Activated T-helper 1 cell treated with anti-CD3 and anti-CD28 coated beads, Interleukin-12 subunit alpha, Interleukin-12 subunit beta, Interleukin-2, Interleukin-4 antibody, amounts not matched to agents 30 ng/mL and 10 ng/mL and 1 ng/mL, durations not matched to agents 14 hours and 24 hours and 36 hours (primary cell): ENCODE measurements at regions of chr20 and their contacts with region 1.

Region 1: GRCh38 chr20:4813863-4814695 is 92.4 kb downstream of the PRND start:
- DNase-seq: peak; percentile 79
- H3K4me3 Mint-ChIP-seq: peak overlapping the region; percentile 89
- H3K27ac Mint-ChIP-seq: peak overlapping the region; percentile 99
- H3K4me1 Mint-ChIP-seq: peaks cover 63% of the 10 kb centered on the region
- H3K27me3 Mint-ChIP-seq: no peaks in the 10 kb centered on the region

Region 2: GRCh38 chr20:3901028-3901705 is 912.9 kb before region 1 on chr20:
- intact Hi-C with region 1: loop called (anchors 10 kb)
- DNase-seq: no peak
- H3K4me3 Mint-ChIP-seq: no peak overlapping the region
- H3K27ac Mint-ChIP-seq: peak overlapping the region; percentile 45
- H3K4me1 Mint-ChIP-seq: peaks cover 52% of the 10 kb centered on the region
- H3K27me3 Mint-ChIP-seq: no peaks in the 10 kb centered on the region

Region 3: DNA sequence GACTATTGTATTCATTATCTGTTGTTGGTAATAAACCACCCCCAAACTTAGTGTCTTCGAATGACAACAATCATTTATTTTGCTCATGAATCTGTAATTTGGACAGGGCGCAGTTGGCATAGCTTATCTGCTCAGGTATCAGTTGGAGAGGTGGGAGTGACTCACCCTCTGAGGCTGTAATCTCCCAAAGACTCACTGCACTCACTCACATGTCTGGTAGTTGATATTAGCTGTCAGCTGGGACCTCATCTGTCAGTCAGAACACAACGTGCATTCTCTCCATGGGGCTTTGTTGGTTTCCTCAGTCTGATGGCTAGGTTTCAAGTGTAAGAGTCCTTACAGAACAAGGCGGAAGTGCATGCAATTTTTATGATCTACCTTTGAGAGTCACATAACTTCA is 311.3 kb before region 1 on chr20:
- intact Hi-C with region 1: no loop called
- DNase-seq: no peak
- H3K4me3 Mint-ChIP-seq: no peak overlapping the region
- H3K27ac Mint-ChIP-seq: no peak overlapping the region
- H3K4me1 Mint-ChIP-seq: no peaks in the 10 kb centered on the region
- H3K27me3 Mint-ChIP-seq: peaks cover 13% of the 10 kb centered on the region

Region 4: DNA sequence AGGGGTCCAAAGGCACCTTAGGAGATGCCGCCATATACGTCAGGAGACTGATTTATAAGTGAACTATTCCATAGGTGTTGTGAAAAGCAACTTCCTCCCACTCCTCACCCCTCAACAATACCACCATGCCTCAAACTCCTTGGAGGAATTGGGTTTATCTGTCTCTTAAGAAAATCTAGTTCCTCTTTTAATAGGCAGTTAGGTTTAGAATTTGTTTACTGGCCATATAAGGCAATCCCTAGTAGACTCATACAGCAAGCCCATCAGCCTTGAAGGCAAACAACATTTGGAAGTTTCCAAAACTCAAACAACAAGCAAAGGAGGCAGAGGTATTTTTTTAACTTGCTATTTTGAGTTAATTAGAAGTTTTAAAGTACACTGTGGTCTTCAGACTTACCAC is 26.3 kb before region 1 on chr20:
- intact Hi-C with region 1: loop called (anchors 2 kb)
- DNase-seq: no peak
- H3K4me3 Mint-ChIP-seq: no peak overlapping the region
- H3K27ac Mint-ChIP-seq: no peak overlapping the region
- H3K4me1 Mint-ChIP-seq: peaks cover 33% of the 10 kb centered on the region
- H3K27me3 Mint-ChIP-seq: no peaks in the 10 kb centered on the region

Region 5: DNA sequence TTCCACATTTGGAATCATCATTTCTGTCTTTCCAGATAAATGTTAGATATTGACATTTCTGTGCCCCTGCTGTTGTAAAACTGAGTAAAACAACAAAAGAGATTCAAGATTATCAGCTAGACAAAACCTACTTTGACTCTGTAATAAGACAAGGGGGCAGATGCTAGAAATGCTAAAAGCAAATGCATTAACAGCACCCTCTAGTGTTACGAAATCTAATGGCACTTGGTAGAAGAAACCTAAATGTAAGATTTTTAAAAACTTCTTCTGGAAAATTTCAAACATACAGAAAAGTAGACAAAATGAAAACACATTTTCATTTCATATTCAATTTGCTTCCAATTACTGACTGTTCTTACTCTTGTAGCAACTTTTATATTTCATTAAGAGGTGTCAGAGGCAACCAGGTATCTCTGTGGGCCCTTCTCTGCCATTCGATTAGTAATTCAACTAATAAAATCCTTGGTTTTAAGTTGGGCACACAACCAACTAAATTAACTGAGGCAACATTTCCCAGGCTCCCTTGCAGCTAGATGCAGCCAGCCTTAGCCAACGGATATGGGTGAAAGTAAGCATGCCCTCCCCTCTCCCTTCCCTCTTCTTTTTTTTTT is 142.2 kb after region 1 on chr20:
- intact Hi-C with region 1: loop called (anchors 2 kb)
- DNase-seq: no peak
- H3K4me3 Mint-ChIP-seq: no peak overlapping the region
- H3K27ac Mint-ChIP-seq: no peak overlapping the region
- H3K4me1 Mint-ChIP-seq: peaks cover 14% of the 10 kb centered on the region
- H3K27me3 Mint-ChIP-seq: no peaks in the 10 kb centered on the region

Region 6: DNA sequence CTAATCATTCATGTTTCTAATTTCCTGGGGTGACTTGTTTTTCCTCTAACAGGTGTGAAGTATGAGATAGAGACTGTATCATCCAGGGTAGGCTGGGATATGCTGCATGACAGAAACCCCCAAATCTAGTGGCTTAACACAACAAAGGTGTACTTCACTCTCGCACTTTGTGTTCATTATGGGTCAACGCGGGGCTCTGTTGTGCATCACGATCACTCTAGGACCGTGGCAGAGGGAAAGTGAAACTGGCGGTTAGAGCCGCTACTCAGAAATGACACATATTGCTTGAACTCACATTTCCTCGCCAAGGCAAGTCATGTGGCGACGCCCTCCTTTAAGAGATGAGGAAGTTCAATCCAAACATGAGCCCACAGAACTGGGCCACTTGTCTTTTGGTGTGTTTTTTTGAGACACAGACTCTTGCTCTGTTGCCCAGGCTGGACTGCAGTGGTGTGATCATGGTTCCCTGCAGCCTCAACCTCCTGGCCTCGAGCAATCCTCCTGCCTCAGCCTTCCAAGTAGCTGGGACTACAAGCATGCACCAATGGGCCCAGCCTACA is 264.4 kb after region 1 on chr20:
- intact Hi-C with region 1: loop called (anchors 1 kb)
- DNase-seq: peak; percentile 81
- H3K4me3 Mint-ChIP-seq: peak overlapping the region; percentile 63
- H3K27ac Mint-ChIP-seq: peak overlapping the region; percentile 89
- H3K4me1 Mint-ChIP-seq: peaks cover 56% of the 10 kb centered on the region
- H3K27me3 Mint-ChIP-seq: no peaks in the 10 kb centered on the region

Region 7: GRCh38 chr20:5119435-5120188 is 305.5 kb after region 1 on chr20 and contains the start of gene PCNA:
- intact Hi-C with region 1: loop called (anchors 1 kb)
- DNase-seq: peak; percentile 98
- H3K4me3 Mint-ChIP-seq: peak within 1 kb of the TSS; percentile 96
- H3K27ac Mint-ChIP-seq: peak within 1 kb of the TSS; percentile 97
- H3K4me1 Mint-ChIP-seq: peaks cover 62% of the 10 kb centered on the region
- H3K27me3 Mint-ChIP-seq: no peaks in the 10 kb centered on the region
- total RNA-seq, gene PCNA: 512 and 519 TPM in 2 replicates

Region 8: DNA sequence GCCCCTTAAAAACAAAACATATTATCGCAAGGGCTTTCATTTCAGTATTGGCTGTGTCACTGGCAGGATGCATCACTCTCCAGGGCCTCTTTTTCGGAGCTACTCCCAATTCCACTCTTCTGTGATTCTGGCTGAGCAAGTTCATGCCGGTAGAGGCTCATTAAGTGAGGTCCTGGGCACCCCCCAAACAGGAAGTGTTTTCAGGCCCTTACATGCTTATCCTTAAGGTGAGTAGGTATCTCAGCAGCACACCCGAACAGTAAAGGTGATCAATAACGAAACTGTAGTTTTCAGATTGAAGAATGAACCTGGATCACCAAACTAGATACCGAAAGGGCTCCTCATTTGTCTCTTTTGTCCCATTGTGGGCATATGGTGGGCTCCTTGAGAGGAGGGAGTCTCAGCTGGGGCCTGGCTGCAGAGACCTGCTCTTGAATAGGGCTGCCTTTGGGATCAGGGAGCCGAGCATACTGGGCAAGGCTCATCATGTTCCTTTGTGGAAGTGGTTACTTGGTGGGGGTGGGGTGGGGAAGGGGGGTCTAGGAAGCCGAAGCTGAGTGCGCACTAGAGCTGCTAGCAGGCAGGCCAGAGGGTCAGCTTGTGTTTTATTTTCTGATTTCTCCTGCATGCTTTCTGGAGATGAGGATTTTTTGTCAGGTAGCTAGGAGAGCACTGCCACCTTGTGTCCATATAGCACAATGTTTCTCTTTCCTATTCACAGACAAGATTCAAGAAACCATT is 377.9 kb after region 1 on chr20:
- intact Hi-C with region 1: loop called (anchors 1 kb)
- DNase-seq: peak; percentile 17
- H3K4me3 Mint-ChIP-seq: no peak overlapping the region
- H3K27ac Mint-ChIP-seq: peak overlapping the region; percentile 73
- H3K4me1 Mint-ChIP-seq: peaks cover 20% of the 10 kb centered on the region
- H3K27me3 Mint-ChIP-seq: no peaks in the 10 kb centered on the region